ENCODE measurements at regions of chr17 and their contacts with region 1.

Region 1: GRCh38 chr17:32877164-32877764 is 340 bp upstream of the MYO1D start:
- DNase-seq: peak; percentile 89
- H3K4me3 ChIP-seq: peak overlapping the region; percentile 58 to 81 (median 72)
- H3K27ac ChIP-seq: peak overlapping the region; percentile 77
- H3K4me1 ChIP-seq: peaks cover 22% of the 10 kb centered on the region
- H3K27me3 ChIP-seq: peaks cover 0 to 3% of the 10 kb centered on the region in 2 experiments
- CTCF ChIP-seq: peak; percentile 93 to 96
- POLR2A ChIP-seq: no peak

Region 2: DNA sequence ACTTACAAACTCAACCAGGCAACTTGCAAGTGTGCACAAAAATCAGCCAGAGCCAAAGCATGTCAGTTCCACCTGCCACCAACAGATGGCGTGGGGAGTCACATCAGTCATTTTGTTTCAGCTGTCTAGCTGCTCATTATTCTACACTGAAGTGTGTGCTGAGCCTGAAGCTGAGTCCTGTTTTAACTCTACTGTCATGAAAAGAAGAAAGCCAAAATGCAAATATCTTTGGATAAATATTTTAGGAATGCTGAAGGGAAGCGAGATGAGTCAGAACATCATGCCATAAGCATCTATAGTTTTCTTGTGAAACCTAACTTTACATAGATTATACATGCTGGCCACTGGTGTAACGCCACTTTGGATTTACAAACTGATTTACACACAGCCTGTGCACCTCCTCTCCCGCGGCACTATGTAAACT is 217.8 kb before region 1 on chr17:
- CTCF ChIA-PET with region 1: interaction called, 5 read pairs
- POLR2A ChIA-PET with region 1: no interaction called
- dilution Hi-C with region 1: no loop called
- intact Hi-C with region 1: loop called (anchors 1 kb)
- DNase-seq: peak; percentile 84
- H3K4me3 ChIP-seq: no peak overlapping the region
- H3K27ac ChIP-seq: no peak overlapping the region
- H3K4me1 ChIP-seq: no peaks in the 10 kb centered on the region
- H3K27me3 ChIP-seq: no peaks in the 10 kb centered on the region
- CTCF ChIP-seq: peak; percentile 85 to 92
- POLR2A ChIP-seq: no peak

Region 3: DNA sequence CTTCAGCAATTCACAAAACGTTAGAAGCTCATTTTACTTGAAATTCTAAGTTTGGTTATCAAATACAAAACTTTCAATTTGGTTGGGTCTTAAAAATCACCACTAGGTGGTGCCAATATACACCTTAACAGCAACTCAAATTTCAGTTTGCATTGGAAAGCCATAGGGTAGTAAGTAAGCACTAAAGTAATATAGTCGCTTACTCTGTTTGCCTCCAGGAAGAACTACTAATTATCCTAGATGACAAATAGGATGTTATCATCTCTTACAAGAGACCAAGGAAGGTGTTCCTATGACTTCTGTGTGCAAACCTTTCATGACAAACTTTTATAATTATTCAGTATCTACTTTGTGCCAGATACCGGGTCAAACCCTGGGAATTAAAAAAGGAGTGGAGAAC is 93.7 kb before region 1 on chr17:
- CTCF ChIA-PET with region 1: interaction called, 420 read pairs
- POLR2A ChIA-PET with region 1: no interaction called
- dilution Hi-C with region 1: no loop called
- intact Hi-C with region 1: loop called (anchors 1 kb)
- DNase-seq: peak; percentile 75
- H3K4me3 ChIP-seq: no peak overlapping the region
- H3K27ac ChIP-seq: no peak overlapping the region
- H3K4me1 ChIP-seq: peaks cover 4% of the 10 kb centered on the region
- H3K27me3 ChIP-seq: no peaks in the 10 kb centered on the region
- CTCF ChIP-seq: peak; percentile 37 to 53
- POLR2A ChIP-seq: no peak

Region 4: DNA sequence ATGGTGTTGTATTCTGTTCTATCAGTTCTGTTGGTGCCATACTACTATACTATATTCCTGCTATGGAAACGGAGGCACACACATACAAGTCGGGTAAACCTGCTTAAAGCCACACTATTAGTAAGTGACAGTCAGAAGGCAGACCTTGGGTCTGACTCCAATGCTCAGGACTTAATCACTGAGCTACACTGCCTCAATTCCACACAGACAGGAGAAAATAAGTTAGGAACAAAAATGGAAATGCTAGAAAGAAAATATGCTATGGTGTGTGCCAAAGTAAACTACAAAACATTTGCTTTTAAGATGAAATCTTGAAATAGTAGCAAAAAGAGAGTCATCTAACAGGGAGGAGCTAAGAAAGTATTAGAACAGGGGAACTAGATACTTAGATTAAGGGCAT is 48.4 kb before region 1 on chr17:
- CTCF ChIA-PET with region 1: interaction called, 32 read pairs
- POLR2A ChIA-PET with region 1: no interaction called
- dilution Hi-C with region 1: no loop called
- intact Hi-C with region 1: no loop called
- DNase-seq: no peak
- H3K4me3 ChIP-seq: no peak overlapping the region
- H3K27ac ChIP-seq: no peak overlapping the region
- H3K4me1 ChIP-seq: peaks cover 12% of the 10 kb centered on the region
- H3K27me3 ChIP-seq: no peaks in the 10 kb centered on the region
- CTCF ChIP-seq: no peak
- POLR2A ChIP-seq: no peak

Region 5: DNA sequence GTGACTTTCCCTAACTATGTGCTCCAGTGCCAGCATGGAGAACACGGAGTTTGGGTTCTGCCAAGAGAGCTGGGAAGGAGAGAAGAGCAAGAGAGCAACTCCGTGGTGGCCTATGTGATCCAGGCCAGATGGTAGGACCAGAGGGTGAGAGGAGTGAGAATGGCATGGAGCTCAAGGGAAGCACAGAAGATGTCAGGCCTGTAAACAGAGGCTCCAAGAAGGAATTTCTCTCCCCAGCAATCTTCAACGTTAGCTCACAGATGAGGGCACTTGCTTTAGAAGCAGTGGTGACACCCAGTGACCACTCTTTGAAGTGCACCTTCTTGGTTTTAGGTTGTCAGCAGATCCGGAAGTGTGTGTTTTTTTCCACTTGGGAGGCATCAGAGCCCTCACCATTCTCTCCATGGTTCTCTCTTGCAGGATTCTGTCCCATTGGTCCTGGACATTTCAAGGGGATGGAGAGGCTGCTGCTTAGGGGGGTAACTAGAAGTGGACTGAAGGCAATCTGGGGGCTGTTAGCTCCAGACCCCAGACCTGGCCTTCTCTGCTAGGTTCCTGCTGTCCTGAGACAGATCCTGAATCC is 32.6 kb after region 1 on chr17:
- CTCF ChIA-PET with region 1: interaction called, 75 read pairs
- POLR2A ChIA-PET with region 1: interaction called, 3 read pairs
- dilution Hi-C with region 1: no loop called
- intact Hi-C with region 1: loop called (anchors 2 kb)
- DNase-seq: peak; percentile 88
- H3K4me3 ChIP-seq: no peak overlapping the region
- H3K27ac ChIP-seq: no peak overlapping the region
- H3K4me1 ChIP-seq: peaks cover 9% of the 10 kb centered on the region
- H3K27me3 ChIP-seq: peaks cover 0 to under 1% of the 10 kb centered on the region in 2 experiments
- CTCF ChIP-seq: peak; percentile 72 to 81
- POLR2A ChIP-seq: no peak

Region 6: GRCh38 chr17:32997753-32998632 is 120.7 kb after region 1 on chr17:
- CTCF ChIA-PET with region 1: interaction called, 14 read pairs
- POLR2A ChIA-PET with region 1: no interaction called
- dilution Hi-C with region 1: no loop called
- intact Hi-C with region 1: no loop called
- DNase-seq: peak; percentile 67
- H3K4me3 ChIP-seq: no peak overlapping the region
- H3K27ac ChIP-seq: no peak overlapping the region
- H3K4me1 ChIP-seq: no peaks in the 10 kb centered on the region
- H3K27me3 ChIP-seq: no peaks in the 10 kb centered on the region
- CTCF ChIP-seq: peak; percentile 86 to 95
- POLR2A ChIP-seq: no peak